ENCODE measurements at regions of chr4 and their contacts with region 1.

Region 1: GRCh38 chr4:105471566-105472176 is 2.2 kb downstream of the PPA2 start:
- DNase-seq: peak in 4 of 5 donors; percentile 53 to 72 (median 66)
- ATAC-seq: peak; percentile 41 to 63 (median 45)
- H3K4me3 ChIP-seq: peak overlapping the region in 10 of 12 donors; percentile 70 to 98 (median 92)
- H3K27ac ChIP-seq: peak overlapping the region in 11 of 12 donors; percentile 11 to 100 (median 99)
- H3K4me1 ChIP-seq: peaks cover 0 to 51% (median 35%) of the 10 kb centered on the region in 12 donors
- H3K27me3 ChIP-seq: no peaks in the 10 kb centered on the region
- CTCF ChIP-seq: peak; percentile 61 to 82 (median 74)
- POLR2A ChIP-seq: no peak

Region 2: GRCh38 chr4:104490770-104491480 is 980.7 kb before region 1 on chr4:
- intact Hi-C with region 1: loop called in 2 of 10 experiments (anchors 5 to 10 kb)
- DNase-seq: peak; percentile 77 to 86 (median 83)
- ATAC-seq: peak; percentile 16 to 65 (median 36)
- H3K4me3 ChIP-seq: peak overlapping the region; percentile 41 to 78 (median 63)
- H3K27ac ChIP-seq: peak overlapping the region in 11 of 12 donors; percentile 25 to 89 (median 83)
- H3K4me1 ChIP-seq: peaks cover 0 to 33% (median 11%) of the 10 kb centered on the region in 12 donors
- H3K27me3 ChIP-seq: peaks cover 0 to 50% (median 0%) of the 10 kb centered on the region in 9 donors
- CTCF ChIP-seq: no peak
- POLR2A ChIP-seq: no peak

Region 3: DNA sequence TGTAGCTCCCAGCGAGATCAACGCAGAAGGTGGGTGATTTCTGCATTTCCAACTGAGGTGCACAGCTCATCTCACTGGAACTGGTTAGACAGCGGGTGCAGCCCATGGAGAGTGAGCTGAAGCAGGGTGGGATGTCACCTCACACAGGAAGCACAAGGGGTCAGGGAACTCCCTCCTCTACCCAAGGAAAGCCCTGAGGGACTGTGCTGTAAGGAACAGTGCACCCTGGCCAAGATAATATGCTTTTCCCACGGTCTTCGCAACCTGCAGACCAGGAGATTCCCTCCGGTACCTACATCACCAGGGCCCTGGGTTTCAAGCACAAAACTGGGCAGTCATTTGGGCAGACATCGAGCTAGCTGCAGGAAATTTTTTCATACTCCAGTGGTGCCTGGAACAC is 541.4 kb before region 1 on chr4:
- intact Hi-C with region 1: loop called in 2 of 10 experiments (anchors 5 to 10 kb)
- DNase-seq: no peak
- ATAC-seq: no peak
- H3K4me3 ChIP-seq: no peak overlapping the region
- H3K27ac ChIP-seq: no peak overlapping the region
- H3K4me1 ChIP-seq: peaks cover 0 to 11% (median 0%) of the 10 kb centered on the region in 12 donors
- H3K27me3 ChIP-seq: no peaks in the 10 kb centered on the region
- CTCF ChIP-seq: no peak
- POLR2A ChIP-seq: no peak

Region 4: GRCh38 chr4:105140684-105141490 is 330.8 kb before region 1 on chr4:
- intact Hi-C with region 1: loop called (anchors 1 to 5 kb)
- DNase-seq: peak in 4 of 5 donors; percentile 25 to 34 (median 27)
- ATAC-seq: peak in 3 of 4 donors; percentile 64 to 75 (median 68)
- H3K4me3 ChIP-seq: no peak overlapping the region
- H3K27ac ChIP-seq: no peak overlapping the region
- H3K4me1 ChIP-seq: peaks cover 0 to 24% (median 0%) of the 10 kb centered on the region in 12 donors
- H3K27me3 ChIP-seq: no peaks in the 10 kb centered on the region
- CTCF ChIP-seq: peak; percentile 58 to 82 (median 70)
- POLR2A ChIP-seq: no peak

Region 5: GRCh38 chr4:105246712-105247111 is 225.0 kb before region 1 on chr4:
- intact Hi-C with region 1: loop called in 1 of 10 experiments (anchors 10 kb)
- DNase-seq: no peak
- ATAC-seq: peak in 3 of 4 donors; percentile 44 to 68 (median 53)
- H3K4me3 ChIP-seq: no peak overlapping the region
- H3K27ac ChIP-seq: no peak overlapping the region
- H3K4me1 ChIP-seq: peaks cover 0 to 13% (median 2%) of the 10 kb centered on the region in 12 donors
- H3K27me3 ChIP-seq: no peaks in the 10 kb centered on the region
- CTCF ChIP-seq: no peak
- POLR2A ChIP-seq: no peak

Region 6: GRCh38 chr4:105265689-105266088 is 206.0 kb before region 1 on chr4:
- intact Hi-C with region 1: loop called in 3 of 10 experiments (anchors 10 kb)
- DNase-seq: no peak
- ATAC-seq: no peak
- H3K4me3 ChIP-seq: no peak overlapping the region
- H3K27ac ChIP-seq: no peak overlapping the region
- H3K4me1 ChIP-seq: no peaks in the 10 kb centered on the region
- H3K27me3 ChIP-seq: no peaks in the 10 kb centered on the region
- CTCF ChIP-seq: no peak
- POLR2A ChIP-seq: no peak

Region 7: GRCh38 chr4:105274504-105274903 is 197.2 kb before region 1 on chr4:
- intact Hi-C with region 1: loop called in 3 of 10 experiments (anchors 10 kb)
- DNase-seq: no peak
- ATAC-seq: no peak
- H3K4me3 ChIP-seq: no peak overlapping the region
- H3K27ac ChIP-seq: no peak overlapping the region
- H3K4me1 ChIP-seq: no peaks in the 10 kb centered on the region
- H3K27me3 ChIP-seq: no peaks in the 10 kb centered on the region
- CTCF ChIP-seq: no peak
- POLR2A ChIP-seq: no peak

Measured in heart left ventricle (tissue), 16 donors.